GM23248 (cell line): ENCODE measurements at regions of chr1 and their contacts with region 1.

Region 1: GRCh38 chr1:86846166-86846647 is 67.7 kb downstream of the SELENOF start:
- DNase-seq: peak; percentile 90
- H3K4me3 ChIP-seq: no peak overlapping the region
- H3K27ac ChIP-seq: no peak overlapping the region
- H3K4me1 ChIP-seq: peaks cover 20% of the 10 kb centered on the region
- H3K27me3 ChIP-seq: peaks cover 9% of the 10 kb centered on the region; the same call in 1 of the 2 replicates

Region 2: DNA sequence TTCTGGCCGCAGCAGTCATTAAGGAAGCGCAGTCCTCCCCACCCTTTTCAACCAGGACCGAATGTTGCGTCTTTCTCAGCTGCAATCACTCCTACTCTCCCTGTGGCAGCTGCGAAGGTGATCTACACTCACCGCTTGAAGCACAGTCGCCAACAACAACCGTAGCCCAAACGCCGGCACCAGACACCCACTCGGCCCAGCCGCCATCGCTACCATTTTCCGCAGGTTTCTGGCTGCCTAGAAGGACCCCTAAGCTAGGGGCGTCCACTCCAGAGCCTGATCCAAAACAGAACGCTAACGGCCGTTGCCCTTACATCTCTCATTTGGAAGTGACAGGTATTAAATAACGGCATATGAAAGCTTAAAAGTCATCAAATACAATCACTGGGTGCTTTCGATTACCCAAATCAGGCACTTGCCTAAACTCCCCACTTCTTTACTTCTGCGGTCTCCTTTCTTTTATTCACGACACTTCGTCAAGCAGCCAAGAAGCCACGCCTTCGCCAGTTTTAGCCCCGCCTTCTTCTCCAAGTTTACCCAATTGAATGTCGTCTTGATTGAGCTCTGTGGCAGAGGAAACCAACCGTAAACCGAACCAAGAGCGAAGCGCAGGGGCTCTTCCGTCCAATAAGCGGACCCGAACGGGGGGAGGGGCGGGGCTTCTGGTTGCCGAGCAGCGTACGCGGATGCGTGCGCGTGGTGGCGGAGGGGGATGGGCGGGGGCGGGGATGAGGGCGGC is 67.9 kb after region 1 on chr1 and contains the start of gene SELENOF:
- in situ Hi-C with region 1: loop called (anchors 5 kb)
- DNase-seq: peak; percentile 100
- H3K4me3 ChIP-seq: peak within 1 kb of the TSS; percentile 93
- H3K27ac ChIP-seq: peak within 1 kb of the TSS; percentile 96
- H3K4me1 ChIP-seq: peaks cover 21% of the 10 kb centered on the region
- H3K27me3 ChIP-seq: no peaks in the 10 kb centered on the region
- total RNA-seq, gene SELENOF: 203 and 280 TPM in 2 replicates

Region 3: GRCh38 chr1:87077959-87078639 is 231.9 kb after region 1 on chr1:
- in situ Hi-C with region 1: loop called (anchors 10 kb)
- DNase-seq: no peak
- H3K4me3 ChIP-seq: no peak overlapping the region
- H3K27ac ChIP-seq: no peak overlapping the region
- H3K4me1 ChIP-seq: peaks cover 8% of the 10 kb centered on the region
- H3K27me3 ChIP-seq: no peaks in the 10 kb centered on the region